OCI-LY7 (cell line): ENCODE measurements at regions of chr3 and their contacts with region 1.

Region 1: DNA sequence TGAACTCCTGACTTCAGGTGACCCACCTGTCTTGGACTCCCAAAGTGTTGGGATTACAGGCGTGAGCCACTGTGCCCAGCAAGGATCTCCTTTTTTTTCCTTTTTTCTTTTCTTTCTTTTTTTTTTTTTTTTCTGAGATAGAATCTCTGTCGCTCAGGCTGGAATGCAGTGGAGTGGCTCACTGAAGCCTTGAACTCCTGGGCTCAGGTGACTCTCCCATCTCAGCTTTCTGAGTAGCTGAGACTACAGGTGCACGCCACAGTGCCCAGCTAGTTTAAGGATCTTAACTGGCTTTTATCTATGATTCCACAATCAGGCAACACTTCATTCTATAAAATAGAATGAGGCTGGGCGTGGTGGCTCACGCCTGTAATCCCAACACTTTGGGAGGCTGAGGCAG is 16.3 kb upstream of the NICN1 start:
- DNase-seq: no peak
- H3K4me3 ChIP-seq: no peak overlapping the region
- H3K27ac ChIP-seq: no peak overlapping the region
- H3K4me1 ChIP-seq: peaks cover 31% of the 10 kb centered on the region
- CTCF ChIP-seq: no peak

Region 2: GRCh38 chr3:49428697-49429100 is 16.7 kb before region 1 on chr3:
- CTCF ChIA-PET with region 1: no interaction called
- POLR2A ChIA-PET with region 1: interaction called, 12 read pairs
- intact Hi-C with region 1: loop called (anchors 1 kb)
- DNase-seq: peak; percentile 31
- H3K4me3 ChIP-seq: peak overlapping the region; percentile 71
- H3K27ac ChIP-seq: peak overlapping the region; percentile 82
- H3K4me1 ChIP-seq: peaks cover 14% of the 10 kb centered on the region
- CTCF ChIP-seq: no peak